Activated CD4-positive, alpha-beta T cell treated with anti-CD3 and anti-CD28 coated beads for 36 hours (primary cell): ENCODE measurements at regions of chr6 and their contacts with region 1.

Region 1: GRCh38 chr6:133923938-133924593 is 29.0 kb upstream of the TBPL1 start:
- DNase-seq: peak; percentile 68
- ATAC-seq: peak; percentile 83
- H3K4me3 Mint-ChIP-seq: no peak overlapping the region
- H3K27ac Mint-ChIP-seq: no peak overlapping the region
- H3K4me1 Mint-ChIP-seq: no peaks in the 10 kb centered on the region
- H3K27me3 Mint-ChIP-seq: peaks cover 17% of the 10 kb centered on the region

Region 2: GRCh38 chr6:133184798-133185372 is 739.2 kb before region 1 on chr6:
- CTCF ChIA-PET with region 1: no interaction called
- POLR2A ChIA-PET with region 1: no interaction called
- intact Hi-C with region 1: loop called in 1 of 2 experiments (anchors 10 kb)
- DNase-seq: no peak
- ATAC-seq: no peak
- H3K4me3 Mint-ChIP-seq: no peak overlapping the region
- H3K27ac Mint-ChIP-seq: no peak overlapping the region
- H3K4me1 Mint-ChIP-seq: no peaks in the 10 kb centered on the region
- H3K27me3 Mint-ChIP-seq: peaks cover 3% of the 10 kb centered on the region

Region 3: GRCh38 chr6:133837801-133838349 is 86.2 kb before region 1 on chr6:
- CTCF ChIA-PET with region 1: interaction called, 24 read pairs
- POLR2A ChIA-PET with region 1: no interaction called
- intact Hi-C with region 1: loop called in 1 of 2 experiments (anchors 1 kb)
- DNase-seq: peak; percentile 81
- ATAC-seq: peak; percentile 74
- H3K4me3 Mint-ChIP-seq: peak overlapping the region; percentile 32
- H3K27ac Mint-ChIP-seq: no peak overlapping the region
- H3K4me1 Mint-ChIP-seq: peaks cover 5% of the 10 kb centered on the region
- H3K27me3 Mint-ChIP-seq: peaks cover 18% of the 10 kb centered on the region

Region 4: DNA sequence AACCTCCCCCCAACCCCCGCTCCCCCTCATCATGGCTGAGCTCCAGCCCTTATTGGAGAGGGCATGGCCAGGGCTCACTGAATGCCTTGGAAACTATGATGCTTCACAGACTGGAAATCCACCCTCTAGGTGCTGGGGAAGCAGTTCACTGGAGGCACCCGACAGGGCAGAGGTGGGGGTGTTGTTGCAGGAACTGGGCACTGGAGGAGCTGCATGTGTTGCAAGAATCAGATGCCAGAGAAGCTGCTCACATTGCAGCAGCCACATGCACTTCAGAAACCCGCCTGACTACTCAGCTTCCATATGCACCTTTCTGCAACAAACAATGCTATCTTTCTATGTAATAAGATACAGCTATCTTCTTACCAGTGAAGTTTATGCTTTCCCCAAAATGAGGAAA is 21.1 kb after region 1 on chr6:
- CTCF ChIA-PET with region 1: interaction called, 16 read pairs
- POLR2A ChIA-PET with region 1: no interaction called
- intact Hi-C with region 1: no loop called
- DNase-seq: peak; percentile 14
- ATAC-seq: no peak
- H3K4me3 Mint-ChIP-seq: no peak overlapping the region
- H3K27ac Mint-ChIP-seq: no peak overlapping the region
- H3K4me1 Mint-ChIP-seq: no peaks in the 10 kb centered on the region
- H3K27me3 Mint-ChIP-seq: peaks cover 2% of the 10 kb centered on the region

Region 5: DNA sequence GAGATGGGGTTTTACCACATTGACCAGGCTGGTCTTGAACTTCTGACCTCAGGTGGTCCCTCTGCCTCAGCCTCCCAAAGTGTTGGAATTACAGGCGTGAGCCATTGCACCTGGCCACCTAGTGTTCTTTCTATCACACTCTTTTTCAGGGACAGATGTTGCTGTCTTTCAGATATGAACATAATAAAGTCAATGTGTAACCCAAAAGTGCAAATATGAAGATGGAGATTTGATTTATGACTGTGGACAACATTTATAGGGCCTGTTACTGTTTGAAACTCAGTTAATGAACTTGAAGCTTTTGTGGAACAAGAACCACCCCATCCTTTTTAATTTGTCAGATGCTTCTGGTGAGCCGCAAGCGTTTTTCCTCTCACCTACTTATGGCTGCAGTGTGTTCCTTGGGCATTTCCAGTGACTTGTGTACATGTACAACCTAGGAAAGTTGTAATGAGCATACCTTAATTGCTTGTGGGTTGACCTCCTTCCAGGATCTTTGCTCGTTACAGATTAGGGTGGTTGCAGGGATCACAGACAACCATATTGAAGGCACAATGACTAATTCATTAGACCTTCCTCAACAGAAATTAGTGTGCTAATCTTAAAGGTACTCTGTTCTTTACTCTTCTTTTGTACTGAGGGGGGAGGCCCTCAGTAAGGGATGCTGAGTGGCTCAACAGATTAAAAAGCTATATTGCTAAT is 35.8 kb after region 1 on chr6:
- CTCF ChIA-PET with region 1: interaction called, 15 read pairs
- POLR2A ChIA-PET with region 1: no interaction called
- intact Hi-C with region 1: no loop called
- DNase-seq: no peak
- ATAC-seq: no peak
- H3K4me3 Mint-ChIP-seq: no peak overlapping the region
- H3K27ac Mint-ChIP-seq: peak overlapping the region; percentile 45
- H3K4me1 Mint-ChIP-seq: peaks cover 76% of the 10 kb centered on the region
- H3K27me3 Mint-ChIP-seq: no peaks in the 10 kb centered on the region

Region 6: DNA sequence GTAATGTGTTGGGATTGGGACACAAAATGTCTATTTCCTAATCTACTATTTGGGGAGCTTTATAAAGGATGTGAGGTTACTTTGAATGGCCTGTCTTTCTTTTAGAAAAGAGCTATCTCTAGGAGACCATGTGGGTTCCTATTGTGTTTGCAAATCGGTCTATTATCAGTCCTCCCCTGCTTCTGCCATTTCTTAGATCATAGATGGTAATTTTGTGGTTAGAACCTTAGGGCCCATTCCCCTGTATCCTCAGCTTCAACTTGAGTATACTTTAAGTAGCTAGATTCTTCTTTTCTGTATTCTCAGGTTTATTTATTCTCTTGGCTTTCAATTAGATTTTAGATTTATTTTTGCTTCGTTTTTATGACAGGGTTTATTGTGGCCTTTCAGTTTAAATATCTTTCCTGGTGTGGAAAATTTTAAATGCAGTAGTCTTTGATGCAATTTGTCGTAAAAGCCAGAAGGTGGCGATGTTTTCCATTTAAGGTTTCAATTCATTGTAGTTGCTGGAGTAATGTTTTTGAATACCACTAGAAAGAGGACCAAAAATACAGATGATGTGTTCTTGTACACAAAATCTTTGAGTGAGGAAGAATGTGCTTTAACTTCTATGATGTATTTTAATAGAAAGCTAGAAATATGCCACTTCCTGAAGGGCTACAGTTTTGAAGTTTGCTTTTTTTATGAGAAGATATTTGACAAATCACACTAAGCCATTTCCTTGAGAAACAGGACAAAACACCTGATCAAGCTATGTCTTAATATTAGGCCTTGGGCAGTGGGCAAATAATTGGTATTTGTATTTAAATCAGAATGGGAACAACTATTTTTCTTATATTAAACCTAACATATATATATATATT is 49.3 kb after region 1 on chr6:
- CTCF ChIA-PET with region 1: interaction called, 26 read pairs
- POLR2A ChIA-PET with region 1: no interaction called
- intact Hi-C with region 1: loop called (anchors 2 to 5 kb)
- DNase-seq: no peak
- ATAC-seq: peak; percentile 61
- H3K4me3 Mint-ChIP-seq: no peak overlapping the region
- H3K27ac Mint-ChIP-seq: no peak overlapping the region
- H3K4me1 Mint-ChIP-seq: peaks cover 31% of the 10 kb centered on the region
- H3K27me3 Mint-ChIP-seq: no peaks in the 10 kb centered on the region

Region 7: GRCh38 chr6:134097114-134097707 is 173.1 kb after region 1 on chr6:
- CTCF ChIA-PET with region 1: interaction called, 360 read pairs
- POLR2A ChIA-PET with region 1: no interaction called
- intact Hi-C with region 1: loop called (anchors 1 kb)
- DNase-seq: peak; percentile 79
- ATAC-seq: no peak
- H3K4me3 Mint-ChIP-seq: no peak overlapping the region
- H3K27ac Mint-ChIP-seq: no peak overlapping the region
- H3K4me1 Mint-ChIP-seq: no peaks in the 10 kb centered on the region
- H3K27me3 Mint-ChIP-seq: peaks cover 13% of the 10 kb centered on the region